ENCODE measurements at regions of chr10 and their contacts with region 1.

Region 1: DNA sequence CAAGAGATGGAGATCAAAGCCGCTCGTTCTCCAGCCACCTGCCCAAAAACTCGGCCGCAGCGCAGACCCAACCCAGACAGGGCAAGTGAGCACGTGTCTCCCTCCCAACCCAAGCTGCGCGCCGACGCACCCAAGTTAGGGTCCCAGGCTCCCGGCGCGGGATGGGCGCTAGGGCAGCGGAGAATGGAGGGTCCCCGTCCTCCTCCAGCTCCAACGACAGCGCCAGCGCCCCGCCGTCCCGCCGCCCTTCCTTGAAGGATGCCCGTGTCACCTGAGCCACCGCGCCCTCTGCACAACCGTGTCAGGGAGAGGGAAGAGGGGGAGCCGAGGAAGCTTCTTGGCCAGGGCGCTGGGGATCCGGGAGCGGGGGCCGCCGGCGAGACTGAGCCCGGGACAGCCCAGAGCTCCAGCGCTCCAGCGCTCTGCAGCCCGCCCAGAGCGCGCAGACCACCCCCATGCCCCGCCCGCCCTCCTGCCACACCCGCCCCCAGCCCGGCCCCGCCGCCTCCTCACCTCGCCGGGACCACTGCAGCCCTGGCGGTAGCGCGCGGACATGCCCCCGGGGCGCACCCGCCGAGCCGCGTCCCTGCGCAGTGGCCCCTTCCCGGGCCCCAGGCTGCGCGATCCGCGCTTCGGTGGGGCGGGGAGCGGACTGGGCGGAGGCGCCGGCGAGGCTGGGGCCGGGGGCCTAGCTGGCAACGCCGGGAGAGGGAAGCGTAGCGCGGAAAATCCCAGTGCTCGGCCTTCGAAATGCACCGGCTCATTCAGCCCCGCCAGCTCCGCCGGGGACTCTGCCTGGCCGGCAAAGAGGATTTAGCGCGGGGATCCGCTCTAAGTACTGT is at the start of gene SLC16A12:
- DNase-seq: peak; percentile 36
- H3K4me3 ChIP-seq: peak within 1 kb of the TSS; percentile 62 to 71
- H3K27ac ChIP-seq: peak within 1 kb of the TSS; percentile 34 to 82
- H3K4me1 ChIP-seq: peaks cover 3% of the 10 kb centered on the region
- H3K27me3 ChIP-seq: no peaks in the 10 kb centered on the region
- CTCF ChIP-seq: no peak
- POLR2A ChIP-seq: no peak
- total RNA-seq, gene SLC16A12: 1.9 to 6.0 TPM

Region 2: GRCh38 chr10:89086801-89087521 is 448.4 kb before region 1 on chr10:
- intact Hi-C with region 1: no loop called
- DNase-seq: peak; percentile 59
- H3K4me3 ChIP-seq: peak overlapping the region in 1 of 2 donors; percentile 19
- H3K27ac ChIP-seq: peak overlapping the region; percentile 20 to 64
- H3K4me1 ChIP-seq: peaks cover 3% of the 10 kb centered on the region
- H3K27me3 ChIP-seq: no peaks in the 10 kb centered on the region
- CTCF ChIP-seq: no peak
- POLR2A ChIP-seq: no peak

Region 3: DNA sequence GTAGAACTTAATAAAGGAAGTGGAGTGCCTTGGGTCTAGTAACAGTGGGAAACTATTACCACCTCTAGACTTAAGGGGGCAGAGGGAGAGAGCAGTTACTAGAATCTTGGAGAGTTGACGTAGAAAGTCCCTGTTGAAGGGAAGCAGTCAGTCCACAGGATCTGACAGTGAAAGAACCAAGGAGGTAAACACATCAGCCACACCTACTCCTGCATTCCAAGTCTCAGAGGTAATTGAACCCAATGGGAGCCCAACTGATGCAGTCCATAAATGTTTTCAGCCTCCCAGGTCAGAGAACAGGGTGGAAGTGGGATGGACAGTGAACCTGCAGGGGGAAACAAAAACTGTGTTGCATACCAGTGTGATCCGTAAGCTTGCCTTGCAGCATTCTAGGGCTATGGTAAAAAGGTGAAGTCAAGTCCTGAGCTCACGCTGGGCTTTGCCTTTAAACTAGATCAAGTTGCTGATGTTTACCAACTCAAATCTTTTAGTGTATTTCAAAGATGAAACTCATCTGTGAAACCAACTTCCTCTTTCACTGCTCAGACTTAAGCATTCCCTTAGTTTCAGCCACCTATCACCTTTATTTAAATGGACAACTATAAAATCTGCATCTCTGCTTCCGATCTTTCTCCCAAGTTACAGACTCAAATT is 57.2 kb before region 1 on chr10:
- intact Hi-C with region 1: loop called (anchors 10 kb)
- DNase-seq: no peak
- H3K4me3 ChIP-seq: no peak overlapping the region
- H3K27ac ChIP-seq: peak overlapping the region; percentile 27 to 83
- H3K4me1 ChIP-seq: peaks cover 58% of the 10 kb centered on the region
- H3K27me3 ChIP-seq: no peaks in the 10 kb centered on the region
- CTCF ChIP-seq: no peak
- POLR2A ChIP-seq: no peak

Region 4: DNA sequence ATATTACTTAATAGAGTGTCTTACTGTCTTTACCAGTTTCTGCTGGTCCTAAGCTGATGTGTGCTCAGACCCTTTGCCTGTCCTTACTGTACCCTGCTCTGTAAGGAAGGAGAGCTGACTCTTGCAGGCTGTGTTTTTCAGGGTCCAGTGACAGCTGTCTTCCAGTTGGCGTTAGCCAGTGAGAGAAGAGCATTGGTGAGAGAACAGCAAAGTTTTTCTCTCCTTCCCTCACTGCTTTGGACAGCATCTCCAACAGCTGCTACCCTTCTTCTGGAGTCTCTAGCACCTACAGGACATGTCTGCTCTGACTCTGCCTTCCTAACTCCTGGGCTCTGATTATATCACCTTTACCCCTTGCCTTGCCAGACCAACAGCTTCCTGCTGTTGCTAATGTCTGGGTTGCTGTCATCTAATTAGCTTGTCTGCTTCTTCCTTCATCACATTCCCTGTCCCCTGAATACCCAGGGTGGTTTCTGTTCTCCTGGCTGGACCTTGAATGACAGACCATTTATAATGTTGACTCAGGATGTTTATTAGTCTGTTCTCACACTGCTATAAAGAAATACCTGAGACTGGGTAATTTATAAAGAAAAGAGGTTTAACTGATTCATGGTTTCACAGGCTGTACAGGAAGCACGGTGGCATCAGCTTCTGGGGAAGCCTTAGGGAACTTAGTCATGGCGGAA is 133.1 kb after region 1 on chr10:
- intact Hi-C with region 1: no loop called
- DNase-seq: no peak
- H3K4me3 ChIP-seq: no peak overlapping the region
- H3K27ac ChIP-seq: no peak overlapping the region
- H3K4me1 ChIP-seq: peaks cover 9% of the 10 kb centered on the region
- H3K27me3 ChIP-seq: no peaks in the 10 kb centered on the region
- CTCF ChIP-seq: no peak
- POLR2A ChIP-seq: no peak

Region 5: DNA sequence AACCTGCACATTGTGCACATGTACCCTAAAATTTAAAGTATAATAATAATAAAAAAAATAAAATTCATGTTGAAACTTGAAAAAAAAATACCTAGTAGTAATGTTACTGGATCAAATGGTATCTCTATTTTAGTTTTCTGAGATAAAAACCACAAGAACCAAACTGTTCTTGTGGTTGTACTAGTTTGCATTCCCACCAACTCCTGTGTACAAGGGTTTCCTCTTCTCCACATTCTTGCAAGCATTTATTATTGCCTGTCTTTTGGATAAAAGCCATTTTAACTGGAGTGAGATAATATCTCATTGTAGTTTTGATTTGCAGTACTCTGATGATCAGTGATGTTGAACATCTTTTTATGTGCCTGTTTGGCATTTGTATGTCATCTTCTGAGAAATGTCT is 343.7 kb after region 1 on chr10:
- intact Hi-C with region 1: no loop called
- DNase-seq: no peak
- H3K4me3 ChIP-seq: no peak overlapping the region
- H3K27ac ChIP-seq: no peak overlapping the region
- H3K4me1 ChIP-seq: no peaks in the 10 kb centered on the region
- H3K27me3 ChIP-seq: no peaks in the 10 kb centered on the region
- CTCF ChIP-seq: no peak
- POLR2A ChIP-seq: no peak